A673 (cell line): ENCODE measurements at regions of chr1 and their contacts with region 1.

Region 1: GRCh38 chr1:240765732-240766363 is 153.9 kb upstream of the GREM2 start:
- DNase-seq: no peak
- H3K4me3 ChIP-seq: no peak overlapping the region
- H3K27ac ChIP-seq: no peak overlapping the region
- H3K4me1 ChIP-seq: no peaks in the 10 kb centered on the region
- H3K27me3 ChIP-seq: peaks cover 8% of the 10 kb centered on the region
- CTCF ChIP-seq: no peak

Region 2: DNA sequence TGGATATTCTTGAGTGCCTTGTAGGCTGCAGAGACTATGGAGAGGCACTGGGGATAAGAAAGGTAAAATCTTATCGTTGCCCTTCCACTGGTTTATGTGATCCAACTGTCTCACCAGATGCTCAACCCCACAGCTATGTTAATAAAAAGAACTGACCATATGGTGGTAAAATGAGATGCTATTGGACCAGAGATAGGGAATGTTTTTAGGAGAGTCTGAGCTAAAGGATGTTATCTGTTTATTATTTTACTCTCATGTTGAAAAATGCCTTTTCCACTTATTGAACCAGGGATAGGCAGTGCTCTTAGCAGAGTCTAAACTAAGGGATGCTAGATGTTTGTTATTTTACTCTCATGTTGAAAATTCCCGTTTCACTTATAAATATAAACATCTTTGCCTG is 18.9 kb after region 1 on chr1:
- CTCF ChIA-PET with region 1: no interaction called
- POLR2A ChIA-PET with region 1: interaction called, 10 read pairs
- intact Hi-C with region 1: no loop called
- DNase-seq: no peak
- H3K4me3 ChIP-seq: no peak overlapping the region
- H3K27ac ChIP-seq: no peak overlapping the region
- H3K4me1 ChIP-seq: no peaks in the 10 kb centered on the region
- H3K27me3 ChIP-seq: no peaks in the 10 kb centered on the region
- CTCF ChIP-seq: no peak

Region 3: DNA sequence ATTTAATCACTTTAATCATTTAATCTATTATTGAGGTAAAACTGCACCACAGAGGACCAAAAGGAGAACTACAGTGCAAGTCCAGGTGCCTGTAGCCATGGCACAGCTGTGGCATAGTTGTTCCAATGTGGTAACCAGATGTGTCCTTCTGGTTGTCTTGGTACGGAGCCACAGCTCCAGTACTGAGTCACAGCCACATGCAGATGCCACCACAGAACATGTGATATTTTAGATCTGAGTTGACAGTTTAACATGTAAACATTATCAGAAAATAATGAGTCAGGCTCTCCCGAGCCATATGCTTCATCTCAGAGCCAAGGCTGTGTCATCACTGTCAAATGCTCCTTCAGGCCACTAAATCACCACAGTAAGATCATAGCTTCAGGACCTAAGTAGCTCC is 647.5 kb after region 1 on chr1:
- CTCF ChIA-PET with region 1: no interaction called
- POLR2A ChIA-PET with region 1: no interaction called
- intact Hi-C with region 1: no loop called
- DNase-seq: no peak
- H3K4me3 ChIP-seq: no peak overlapping the region
- H3K27ac ChIP-seq: no peak overlapping the region
- H3K4me1 ChIP-seq: no peaks in the 10 kb centered on the region
- H3K27me3 ChIP-seq: no peaks in the 10 kb centered on the region
- CTCF ChIP-seq: no peak

Region 4: DNA sequence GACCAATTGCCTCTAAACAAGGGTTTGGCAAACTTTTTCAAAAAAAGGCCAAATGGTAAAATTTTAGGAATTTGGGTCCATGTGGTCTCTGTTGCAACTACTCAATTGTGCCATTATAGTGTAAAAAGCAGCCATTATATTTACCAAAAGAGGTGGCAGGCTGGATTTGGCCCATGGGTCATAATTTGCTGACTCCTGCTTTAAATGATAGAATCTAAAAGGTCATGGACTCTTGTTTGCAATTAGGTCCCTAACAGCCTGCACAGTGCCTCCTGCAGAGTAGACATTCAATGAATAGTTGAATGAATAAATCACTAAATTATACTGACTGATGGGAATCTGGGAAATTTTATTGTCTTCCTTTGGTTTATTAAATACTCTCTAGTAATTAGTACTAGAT is 1197.9 kb after region 1 on chr1:
- CTCF ChIA-PET with region 1: interaction called, 10 read pairs
- POLR2A ChIA-PET with region 1: no interaction called
- intact Hi-C with region 1: no loop called
- DNase-seq: no peak
- H3K4me3 ChIP-seq: no peak overlapping the region
- H3K27ac ChIP-seq: no peak overlapping the region
- H3K4me1 ChIP-seq: no peaks in the 10 kb centered on the region
- H3K27me3 ChIP-seq: no peaks in the 10 kb centered on the region
- CTCF ChIP-seq: no peak